Gastrocnemius medialis (tissue), 4 donors: ENCODE measurements at regions of chr17 and their contacts with region 1.

Region 1: GRCh38 chr17:56577843-56578204 is 15.7 kb upstream of the NOG start:
- DNase-seq: peak; percentile 54 to 76
- ATAC-seq: peak; percentile 79 to 81
- H3K4me3 ChIP-seq: peak overlapping the region; percentile 23 to 45 (median 40)
- H3K27ac ChIP-seq: peak overlapping the region; percentile 66 to 92 (median 86)
- H3K4me1 ChIP-seq: peaks cover 40 to 52% of the 10 kb centered on the region in 2 donors
- H3K27me3 ChIP-seq: no peaks in the 10 kb centered on the region
- CTCF ChIP-seq: no peak
- POLR2A ChIP-seq: no peak

Region 2: GRCh38 chr17:56699186-56699895 is 121.5 kb after region 1 on chr17:
- in situ Hi-C with region 1: no loop called
- intact Hi-C with region 1: loop called (anchors 5 kb)
- DNase-seq: peak in 1 of 2 donors; percentile 38
- ATAC-seq: peak; percentile 85 to 86
- H3K4me3 ChIP-seq: no peak overlapping the region
- H3K27ac ChIP-seq: peak overlapping the region; percentile 9 to 48 (median 32)
- H3K4me1 ChIP-seq: peaks cover 11 to 13% of the 10 kb centered on the region in 2 donors
- H3K27me3 ChIP-seq: no peaks in the 10 kb centered on the region
- CTCF ChIP-seq: no peak
- POLR2A ChIP-seq: no peak

Region 3: DNA sequence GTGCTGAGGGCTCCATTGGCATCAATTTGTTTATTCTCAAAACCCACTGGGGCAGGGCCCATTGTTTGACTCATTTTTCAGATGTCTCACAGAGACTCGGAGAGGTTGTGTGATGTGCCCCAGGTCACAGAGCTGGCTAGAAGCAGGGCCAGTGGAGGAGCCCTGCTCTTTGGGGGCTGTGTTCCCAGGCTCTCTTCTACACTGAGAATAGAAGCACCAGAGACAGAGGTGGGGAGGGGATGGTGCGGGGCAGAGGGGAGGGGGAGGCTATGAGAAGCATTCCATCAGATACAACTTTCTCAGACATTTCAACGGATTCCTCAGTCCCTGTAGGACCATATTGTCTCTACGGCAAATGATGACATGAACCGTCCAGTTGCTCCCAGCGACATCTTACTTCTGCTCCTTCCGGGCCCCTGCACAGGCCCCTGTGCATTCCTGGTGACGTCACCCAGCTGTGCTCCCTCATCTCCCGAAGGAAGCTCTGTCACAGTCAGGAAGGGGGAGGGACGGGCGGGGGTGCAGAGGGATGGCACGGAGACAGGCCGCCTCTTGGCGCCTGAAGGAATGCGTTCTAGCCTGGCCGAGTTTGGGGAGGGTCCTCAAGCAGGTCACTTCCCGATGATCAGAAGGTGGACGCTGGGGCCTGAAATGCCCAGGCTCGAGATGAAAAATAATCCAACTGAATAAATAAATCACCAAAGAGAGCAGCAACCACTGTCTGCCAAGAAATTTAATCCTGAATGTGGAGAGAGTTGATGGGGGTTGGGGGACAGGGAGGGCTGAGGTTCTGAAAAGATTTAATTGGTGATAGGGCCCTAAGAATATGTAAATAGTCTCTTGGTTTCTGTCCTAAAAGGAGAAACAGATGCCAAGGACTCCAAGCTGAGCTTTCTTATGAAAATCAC is 129.7 kb after region 1 on chr17:
- in situ Hi-C with region 1: loop called in 2 of 4 experiments (anchors 5 to 10 kb)
- intact Hi-C with region 1: loop called (anchors 5 kb)
- DNase-seq: no peak
- ATAC-seq: no peak
- H3K4me3 ChIP-seq: no peak overlapping the region
- H3K27ac ChIP-seq: no peak overlapping the region
- H3K4me1 ChIP-seq: no peaks in the 10 kb centered on the region
- H3K27me3 ChIP-seq: no peaks in the 10 kb centered on the region
- CTCF ChIP-seq: no peak
- POLR2A ChIP-seq: no peak